ENCODE measurements at regions of chr17 and their contacts with region 1.

Region 1: GRCh38 chr17:7561028-7561575 is 617 bp upstream of the SENP3 start:
- DNase-seq: peak; percentile 97
- H3K27ac ChIP-seq: peak overlapping the region; percentile 95
- CTCF ChIP-seq: peak; percentile 84

Region 2: GRCh38 chr17:7436351-7437206 is 124.5 kb before region 1 on chr17:
- CTCF ChIA-PET with region 1: interaction called, 28 read pairs
- POLR2A ChIA-PET with region 1: interaction called, 10 read pairs
- DNase-seq: peak; percentile 72
- H3K27ac ChIP-seq: peak overlapping the region; percentile 92
- CTCF ChIP-seq: peak; percentile 97

Region 3: DNA sequence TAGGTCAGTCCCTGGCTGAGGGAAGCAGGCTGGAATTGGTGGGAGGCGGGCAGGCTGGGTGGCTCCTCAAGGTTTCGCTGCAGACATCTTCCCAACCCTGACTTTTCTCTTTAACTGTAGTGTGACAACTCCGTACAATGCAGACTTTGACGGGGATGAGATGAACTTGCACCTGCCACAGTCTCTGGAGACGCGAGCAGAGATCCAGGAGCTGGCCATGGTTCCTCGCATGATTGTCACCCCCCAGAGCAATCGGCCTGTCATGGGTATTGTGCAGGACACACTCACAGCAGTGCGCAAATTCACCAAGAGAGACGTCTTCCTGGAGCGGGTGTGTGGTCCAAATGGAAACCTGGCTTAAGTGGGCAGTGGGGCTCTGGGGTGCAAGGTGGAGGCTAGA is 61.9 kb before region 1 on chr17:
- CTCF ChIA-PET with region 1: interaction called, 3 read pairs
- POLR2A ChIA-PET with region 1: interaction called, 14 read pairs
- DNase-seq: no peak
- H3K27ac ChIP-seq: no peak overlapping the region
- CTCF ChIP-seq: no peak

Region 4: DNA sequence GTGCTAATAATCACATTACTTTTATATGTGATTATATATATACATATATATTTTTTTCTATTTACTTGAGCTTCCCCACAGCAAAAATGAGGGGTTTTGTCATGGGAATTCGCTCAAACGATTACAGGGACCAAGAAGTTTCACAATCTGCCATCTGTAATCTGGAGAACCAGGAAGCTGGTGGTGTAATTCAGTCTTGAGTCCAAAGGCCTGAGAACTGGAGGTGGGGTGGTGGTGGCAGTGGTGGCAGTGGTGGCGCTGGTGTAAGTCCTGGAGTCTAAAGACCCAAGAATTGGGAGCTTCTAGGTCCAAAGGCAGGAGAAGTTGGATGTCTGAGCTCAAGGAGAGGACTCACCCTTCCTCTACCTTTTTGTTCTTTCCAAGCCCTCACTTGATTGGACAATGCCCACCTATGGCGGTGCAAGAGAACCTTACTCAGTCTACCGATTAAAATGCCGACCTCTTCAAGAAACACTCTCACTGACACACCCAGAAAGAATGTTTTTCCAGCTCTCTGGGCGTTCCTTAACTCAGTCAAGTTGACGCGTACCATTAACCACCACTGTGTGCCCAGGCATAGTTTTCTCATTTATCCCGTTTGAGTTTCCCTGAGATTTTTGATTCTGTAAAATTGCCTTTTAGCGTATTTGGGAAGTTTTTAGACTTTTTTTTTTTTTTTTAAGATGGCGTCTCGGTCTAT is 45.0 kb before region 1 on chr17:
- CTCF ChIA-PET with region 1: interaction called, 19 read pairs
- POLR2A ChIA-PET with region 1: interaction called, 4 read pairs
- DNase-seq: no peak
- H3K27ac ChIP-seq: no peak overlapping the region
- CTCF ChIP-seq: no peak